KBM-7 (cell line): ENCODE measurements at regions of chr20 and their contacts with region 1.

Region 1: DNA sequence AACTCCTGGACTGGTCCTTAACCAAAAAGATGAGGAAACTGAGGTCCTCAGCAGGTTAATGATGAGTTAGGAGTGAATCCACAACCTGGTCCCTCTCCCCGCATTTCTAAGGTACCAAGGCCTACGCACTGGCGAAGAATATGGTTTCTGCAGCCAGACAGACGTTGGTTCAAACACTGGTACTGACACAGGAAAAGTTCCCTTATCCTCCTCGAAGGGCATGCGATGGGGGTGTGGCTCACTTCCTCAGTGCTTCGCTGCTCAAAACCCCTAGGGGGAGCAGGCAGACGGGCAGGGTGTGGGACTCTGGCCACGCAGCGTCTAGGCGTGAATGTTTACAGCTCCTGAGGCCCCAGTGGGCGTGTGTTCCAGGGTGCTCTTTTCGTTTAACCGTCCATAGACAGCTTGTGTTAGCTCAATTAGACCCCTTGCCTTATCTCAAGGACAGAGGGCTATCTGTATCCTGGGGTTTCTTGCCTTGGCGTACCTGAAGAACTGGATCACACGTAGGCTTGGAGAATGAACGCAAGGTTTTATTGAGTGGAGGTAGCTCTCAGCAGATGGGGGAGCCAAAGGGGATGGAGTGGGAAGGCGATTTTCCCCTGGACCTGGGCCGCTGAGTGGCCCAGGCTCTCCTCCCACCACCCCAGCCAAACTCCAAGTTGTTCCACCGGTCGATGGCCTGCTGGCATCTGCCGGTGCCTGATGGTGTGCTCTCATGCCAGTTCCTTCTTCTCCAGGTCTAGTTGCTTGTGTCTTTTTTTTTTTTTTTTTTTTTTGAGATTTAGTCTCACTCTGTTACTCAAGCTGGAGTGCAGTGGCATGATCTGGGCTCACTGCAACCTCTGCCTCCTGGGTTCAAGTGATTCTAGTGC is 31.8 kb upstream of the PTPN1 start:
- DNase-seq: peak; percentile 86

Region 2: GRCh38 chr20:50575847-50576720 is 97.7 kb after region 1 on chr20:
- in situ Hi-C with region 1: loop called (anchors 10 kb)
- DNase-seq: peak; percentile 74

Region 3: DNA sequence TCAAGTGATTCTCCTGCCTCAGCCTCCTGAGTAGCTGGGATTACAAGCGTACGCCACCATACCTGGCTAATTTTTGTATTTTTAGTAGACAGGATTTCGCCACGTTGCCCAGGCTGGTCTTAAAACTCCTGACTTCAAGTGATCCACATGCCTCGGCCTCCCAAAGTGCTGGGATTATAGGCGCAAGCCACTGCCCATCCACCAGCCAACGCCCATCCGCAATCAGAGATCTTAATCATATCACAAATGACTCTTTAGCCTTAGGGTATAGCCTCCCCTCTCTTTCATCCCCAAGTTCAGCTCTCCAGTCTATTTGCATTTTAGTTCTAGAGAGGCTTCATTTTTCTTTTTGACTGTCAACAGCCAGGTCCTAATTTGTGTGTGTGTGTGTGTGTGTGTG is 461.3 kb after region 1 on chr20:
- in situ Hi-C with region 1: no loop called
- DNase-seq: no peak